Right lobe of liver (tissue), 6 donors: ENCODE measurements at regions of chr5 and their contacts with region 1.

Region 1: GRCh38 chr5:119118000-119118399 is 47.1 kb downstream of the DMXL1 start:
- DNase-seq: no peak
- ATAC-seq: no peak
- H3K4me3 ChIP-seq: no peak overlapping the region
- H3K27ac ChIP-seq: no peak overlapping the region
- H3K4me1 ChIP-seq: peaks cover 0 to 4% (median 0%) of the 10 kb centered on the region in 4 donors
- H3K27me3 ChIP-seq: no peaks in the 10 kb centered on the region
- CTCF ChIP-seq: no peak
- POLR2A ChIP-seq: no peak

Region 2: GRCh38 chr5:119229950-119230349 is 112.0 kb after region 1 on chr5:
- intact Hi-C with region 1: no loop called
- DNase-seq: no peak
- ATAC-seq: peak in 2 of 4 donors; percentile 59 to 84
- H3K4me3 ChIP-seq: no peak overlapping the region
- H3K27ac ChIP-seq: no peak overlapping the region
- H3K4me1 ChIP-seq: peaks cover 0 to 4% (median 0%) of the 10 kb centered on the region in 4 donors
- H3K27me3 ChIP-seq: no peaks in the 10 kb centered on the region
- CTCF ChIP-seq: no peak
- POLR2A ChIP-seq: no peak

Region 3: DNA sequence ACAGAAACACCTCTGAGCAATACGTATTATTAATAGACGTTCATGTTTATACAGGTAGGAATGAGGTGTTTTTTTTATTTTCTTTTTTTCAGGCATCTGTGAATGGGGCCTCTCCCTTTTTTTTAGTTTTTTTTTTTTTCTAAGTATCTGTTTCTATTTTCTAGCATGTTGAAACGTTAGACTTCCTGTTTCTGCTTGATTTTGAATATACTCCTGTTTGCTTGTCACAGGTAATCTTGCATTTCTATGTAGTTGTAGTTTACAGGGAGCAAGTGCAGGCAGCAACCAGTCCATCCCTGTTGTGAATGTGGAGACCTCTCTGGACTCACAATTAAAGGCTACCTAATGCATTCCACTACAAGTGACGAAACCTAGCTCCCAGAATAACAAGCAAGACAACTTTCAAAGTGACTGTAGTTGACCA is 215.0 kb after region 1 on chr5:
- intact Hi-C with region 1: loop called in 1 of 2 experiments (anchors 10 kb)
- DNase-seq: no peak
- ATAC-seq: no peak
- H3K4me3 ChIP-seq: no peak overlapping the region
- H3K27ac ChIP-seq: no peak overlapping the region
- H3K4me1 ChIP-seq: no peaks in the 10 kb centered on the region
- H3K27me3 ChIP-seq: no peaks in the 10 kb centered on the region
- CTCF ChIP-seq: no peak
- POLR2A ChIP-seq: no peak